ENCODE measurements at regions of chr6 and their contacts with region 1.

Region 1: GRCh38 chr6:77986380-77987034 is 333.7 kb downstream of the MEI4 start:
- DNase-seq: no peak
- ATAC-seq: no peak

Region 2: DNA sequence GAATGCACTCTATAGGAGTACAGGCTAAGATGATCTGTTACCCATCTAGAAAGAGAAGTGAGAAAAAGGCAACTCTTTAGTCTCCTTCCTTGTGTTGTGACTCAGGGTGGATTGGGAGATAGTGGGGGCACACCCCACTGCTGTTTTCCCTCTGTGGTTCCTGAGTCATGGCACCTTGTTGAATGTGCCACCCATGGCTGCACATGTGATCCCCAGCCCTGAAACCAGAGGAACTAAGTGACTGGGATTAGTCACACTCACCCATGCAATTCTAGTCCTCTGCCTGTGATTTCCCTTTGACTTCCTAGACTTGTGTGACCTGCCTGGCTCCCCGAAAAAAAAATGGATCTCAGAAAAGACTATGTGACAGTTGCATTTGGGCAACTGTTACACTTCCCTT is 474.6 kb before region 1 on chr6:
- intact Hi-C with region 1: no loop called
- DNase-seq: no peak
- ATAC-seq: no peak

Region 3: DNA sequence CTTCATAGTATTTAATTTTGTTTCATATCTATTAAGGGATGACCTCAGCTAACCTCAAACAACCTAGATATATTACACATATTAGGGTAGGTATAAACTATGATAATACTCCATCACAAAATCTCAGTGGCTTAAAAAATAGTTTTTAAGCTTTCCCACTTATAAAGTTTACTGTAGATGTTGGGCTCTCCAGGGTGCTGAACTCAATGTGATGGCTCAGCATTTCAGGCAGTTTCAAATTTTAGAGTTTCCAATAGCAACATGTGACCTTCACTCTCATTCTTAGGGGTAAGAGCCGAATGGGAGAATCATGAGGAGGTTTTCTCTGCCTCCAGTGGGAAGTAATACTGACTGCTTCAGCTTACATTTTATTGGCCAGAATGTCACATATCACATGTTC is 23.6 kb after region 1 on chr6:
- intact Hi-C with region 1: loop called (anchors 2 kb)
- DNase-seq: no peak
- ATAC-seq: no peak